Activated CD4-positive, alpha-beta memory T cell treated with anti-CD3 and anti-CD28 coated beads, Interleukin-2, amount 10 ng/mL, durations not matched to agents 7 days and 5 days (primary cell): ENCODE measurements at regions of chr1 and their contacts with region 1.

Region 1: GRCh38 chr1:211382714-211383480 is 56.3 kb downstream of the TRAF5 start:
- DNase-seq: peak; percentile 87
- H3K4me3 Mint-ChIP-seq: peak overlapping the region; percentile 83
- H3K27ac Mint-ChIP-seq: peak overlapping the region; percentile 88
- H3K4me1 Mint-ChIP-seq: peaks cover 46% of the 10 kb centered on the region
- H3K27me3 Mint-ChIP-seq: no peaks in the 10 kb centered on the region

Region 2: GRCh38 chr1:211415700-211416099 is 32.8 kb after region 1 on chr1:
- CTCF ChIA-PET with region 1: interaction called, 3 read pairs
- POLR2A ChIA-PET with region 1: interaction called, 13 read pairs
- DNase-seq: no peak
- H3K4me3 Mint-ChIP-seq: peak overlapping the region; percentile 64
- H3K27ac Mint-ChIP-seq: peak overlapping the region; percentile 37
- H3K4me1 Mint-ChIP-seq: peaks cover 21% of the 10 kb centered on the region
- H3K27me3 Mint-ChIP-seq: no peaks in the 10 kb centered on the region